ENCODE measurements at regions of chr15 and their contacts with region 1.

Region 1: GRCh38 chr15:55360256-55360655 is 41.2 kb downstream of the PIGB start:
- DNase-seq: no peak
- H3K4me3 ChIP-seq: no peak overlapping the region
- H3K27ac ChIP-seq: no peak overlapping the region
- H3K4me1 ChIP-seq: peaks cover 24% of the 10 kb centered on the region
- H3K27me3 ChIP-seq: no peaks in the 10 kb centered on the region
- CTCF ChIP-seq: no peak

Region 2: DNA sequence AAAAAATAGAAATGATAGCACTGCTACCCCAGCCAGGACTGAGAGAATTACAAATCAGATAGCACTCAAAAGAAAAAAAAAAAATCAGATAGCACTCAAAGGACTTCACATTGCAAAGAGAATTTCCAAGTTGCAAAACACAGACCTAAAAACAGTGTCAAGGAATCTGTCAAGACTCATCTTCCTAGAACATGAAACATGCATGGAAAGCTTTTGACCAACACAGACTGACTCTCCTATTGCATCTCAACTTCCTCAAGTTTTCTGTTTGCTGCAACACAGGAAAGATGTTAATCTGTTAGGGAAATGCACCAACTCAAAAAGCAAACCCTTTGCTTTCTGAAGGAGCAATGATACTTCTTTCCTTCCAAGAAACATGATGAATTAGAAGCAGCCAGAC is 112.9 kb before region 1 on chr15:
- CTCF ChIA-PET with region 1: no interaction called
- POLR2A ChIA-PET with region 1: interaction called, 10 read pairs
- intact Hi-C with region 1: no loop called
- DNase-seq: no peak
- H3K4me3 ChIP-seq: no peak overlapping the region
- H3K27ac ChIP-seq: no peak overlapping the region
- H3K4me1 ChIP-seq: no peaks in the 10 kb centered on the region; the same call in 1 of the 2 replicates
- H3K27me3 ChIP-seq: no peaks in the 10 kb centered on the region
- CTCF ChIP-seq: no peak

Region 3: DNA sequence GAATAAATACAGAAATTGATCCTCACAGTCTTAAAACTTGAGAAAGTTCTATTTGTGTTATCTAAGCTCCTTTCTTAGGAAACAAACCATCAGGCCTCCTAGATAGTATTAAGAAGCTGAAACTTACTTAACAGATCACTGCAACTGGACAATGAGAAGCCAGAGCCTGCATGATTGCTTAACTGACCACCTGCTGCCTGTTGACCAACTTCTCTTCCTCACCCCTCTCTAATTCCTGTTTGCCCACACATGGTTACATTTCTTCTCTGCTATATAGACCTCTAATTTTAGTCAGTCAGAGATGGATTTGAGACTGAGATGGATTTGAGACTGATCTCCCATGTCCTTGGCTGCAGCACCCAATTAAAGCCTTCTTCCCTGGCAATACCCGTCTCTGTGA is 34.4 kb after region 1 on chr15:
- CTCF ChIA-PET with region 1: no interaction called
- POLR2A ChIA-PET with region 1: no interaction called
- intact Hi-C with region 1: no loop called
- DNase-seq: no peak
- H3K4me3 ChIP-seq: no peak overlapping the region
- H3K27ac ChIP-seq: no peak overlapping the region
- H3K4me1 ChIP-seq: peaks cover 9% of the 10 kb centered on the region
- H3K27me3 ChIP-seq: no peaks in the 10 kb centered on the region
- CTCF ChIP-seq: no peak

Region 4: GRCh38 chr15:55484917-55485672 is 124.8 kb after region 1 on chr15:
- CTCF ChIA-PET with region 1: no interaction called
- POLR2A ChIA-PET with region 1: no interaction called
- intact Hi-C with region 1: no loop called
- DNase-seq: no peak
- H3K4me3 ChIP-seq: no peak overlapping the region
- H3K27ac ChIP-seq: no peak overlapping the region
- H3K4me1 ChIP-seq: 0 out of 2 replicates have a peak, but pooled peaks cover 7% of the 10 kb centered on the region
- H3K27me3 ChIP-seq: no peaks in the 10 kb centered on the region
- CTCF ChIP-seq: no peak